ENCODE measurements at regions of chr20 and their contacts with region 1.

Region 1: GRCh38 chr20:50172347-50173013 is 18.1 kb upstream of the CEBPB start:
- DNase-seq: no peak
- H3K4me3 ChIP-seq: peak overlapping the region; percentile 34
- H3K27me3 ChIP-seq: no peaks in the 10 kb centered on the region
- CTCF ChIP-seq: no peak

Region 2: GRCh38 chr20:49583669-49584417 is 588.6 kb before region 1 on chr20:
- CTCF ChIA-PET with region 1: no interaction called
- POLR2A ChIA-PET with region 1: no interaction called
- DNase-seq: peak; percentile 85
- H3K4me3 ChIP-seq: no peak overlapping the region
- H3K27me3 ChIP-seq: no peaks in the 10 kb centered on the region
- CTCF ChIP-seq: peak; percentile 12; the same call in 1 of the 2 replicates

Region 3: GRCh38 chr20:49948809-49949548 is 223.5 kb before region 1 on chr20:
- CTCF ChIA-PET with region 1: no interaction called
- POLR2A ChIA-PET with region 1: no interaction called
- DNase-seq: peak; percentile 69
- H3K4me3 ChIP-seq: no peak overlapping the region
- H3K27me3 ChIP-seq: no peaks in the 10 kb centered on the region
- CTCF ChIP-seq: no peak

Region 4: GRCh38 chr20:50120897-50121693 is 51.4 kb before region 1 on chr20:
- CTCF ChIA-PET with region 1: interaction called, 169 read pairs
- POLR2A ChIA-PET with region 1: no interaction called
- DNase-seq: no peak
- H3K4me3 ChIP-seq: no peak overlapping the region
- H3K27me3 ChIP-seq: no peaks in the 10 kb centered on the region
- CTCF ChIP-seq: peak; percentile 73

Region 5: DNA sequence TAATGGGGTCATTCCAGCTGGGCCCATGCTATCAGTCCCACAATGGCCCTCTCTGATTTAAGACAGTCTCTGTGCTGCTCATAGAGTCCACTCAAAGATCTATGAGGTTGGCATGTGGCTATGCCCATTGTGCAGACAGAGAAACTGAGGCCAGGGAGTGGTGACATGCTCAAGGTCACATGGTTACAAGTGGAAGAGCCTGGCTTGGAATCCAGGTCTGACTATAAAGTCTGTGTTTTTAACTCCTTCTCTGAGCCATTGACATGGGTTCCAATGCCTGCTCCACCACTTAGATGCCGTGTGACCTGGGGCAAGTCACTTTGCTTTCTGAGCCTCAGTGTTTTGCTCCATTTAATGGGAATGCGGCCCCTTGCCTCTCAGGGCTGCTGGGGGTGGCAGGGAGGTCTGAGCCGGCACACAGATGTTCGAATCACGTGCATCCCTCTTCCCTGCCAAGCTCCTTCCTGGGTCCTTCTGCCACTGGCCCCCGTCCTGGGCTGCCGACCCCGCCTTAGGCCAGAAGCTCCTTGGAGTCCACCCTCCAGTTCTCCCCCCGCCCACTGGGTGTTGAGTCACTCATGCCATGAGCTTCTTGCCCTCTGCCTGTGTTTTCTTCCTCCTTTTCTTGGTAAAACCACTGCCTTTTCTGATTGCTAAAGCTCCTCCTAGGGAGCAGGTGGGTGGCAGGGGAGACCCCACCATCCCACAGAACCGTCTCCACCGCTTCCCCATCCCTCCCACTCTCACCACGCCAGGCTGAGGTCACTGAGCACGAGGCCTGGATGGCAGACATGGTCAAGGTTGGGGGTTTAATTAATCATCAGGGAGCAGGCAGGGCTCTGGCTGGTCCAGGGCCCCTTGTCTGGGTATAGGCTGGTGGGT is 53.9 kb after region 1 on chr20:
- CTCF ChIA-PET with region 1: no interaction called
- POLR2A ChIA-PET with region 1: interaction called, 10 read pairs
- DNase-seq: no peak
- H3K4me3 ChIP-seq: no peak overlapping the region
- H3K27me3 ChIP-seq: no peaks in the 10 kb centered on the region
- CTCF ChIP-seq: no peak

Measured in BJ (cell line).